AG04449 (cell line): ENCODE measurements at regions of chr4 and their contacts with region 1.

Region 1: DNA sequence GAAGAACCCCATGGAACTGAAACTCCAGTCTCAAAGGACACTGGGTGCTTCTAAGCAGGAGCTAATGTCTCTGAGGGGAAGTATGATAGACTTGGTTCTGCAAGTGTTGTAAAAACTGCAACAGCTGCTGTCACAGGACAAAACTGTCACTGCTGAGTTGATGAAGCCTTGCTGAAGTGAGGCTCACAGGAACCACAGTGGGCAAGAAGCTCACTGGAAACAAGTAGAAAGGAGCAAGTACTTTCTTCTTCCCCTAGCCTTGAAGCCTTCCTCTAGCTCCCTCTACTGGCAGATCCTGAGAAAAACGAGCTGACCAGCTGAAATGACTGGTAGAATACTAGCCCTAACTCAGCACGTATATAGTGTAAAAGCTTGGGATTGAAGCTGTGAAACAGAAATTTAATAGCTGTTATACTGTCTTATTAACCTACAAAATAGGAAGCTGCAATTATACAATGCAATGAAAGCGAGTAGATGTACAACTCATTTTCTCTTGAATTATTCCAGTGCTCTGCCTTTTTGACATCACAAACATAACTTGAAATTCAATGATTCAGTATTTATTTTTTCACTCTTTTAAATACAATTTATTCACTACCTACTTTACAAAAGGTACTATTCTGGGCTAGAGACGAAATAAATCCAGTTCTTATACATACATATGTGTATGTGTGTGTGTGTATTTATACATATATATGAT is 91.4 kb downstream of the GABRB1 start:
- DNase-seq: no peak
- H3K4me3 ChIP-seq: no peak overlapping the region
- CTCF ChIP-seq: peak; percentile 79

Region 2: DNA sequence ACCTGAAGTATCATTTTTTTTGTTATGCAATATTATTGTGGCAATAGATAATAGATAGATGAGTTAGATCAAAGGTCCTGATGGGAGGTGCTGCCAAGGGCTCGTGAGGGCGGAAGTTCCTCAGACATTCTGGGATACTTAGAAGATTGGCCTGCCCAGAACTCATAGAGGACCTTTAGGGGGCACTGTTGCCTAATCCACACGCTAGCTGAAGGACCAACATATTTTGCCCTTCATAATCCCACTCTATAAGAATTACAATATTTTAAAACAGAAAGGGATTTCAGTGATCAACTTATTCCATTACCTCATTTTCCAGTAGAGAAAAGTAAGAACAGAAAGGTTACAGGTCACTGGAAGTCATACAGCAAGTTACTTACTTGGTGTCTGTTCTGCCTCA is 190.8 kb before region 1 on chr4:
- CTCF ChIA-PET with region 1: interaction called, 15 read pairs
- POLR2A ChIA-PET with region 1: no interaction called
- DNase-seq: no peak
- H3K4me3 ChIP-seq: no peak overlapping the region
- CTCF ChIP-seq: peak; percentile 71

Region 3: GRCh38 chr4:46975812-46976553 is 146.8 kb before region 1 on chr4:
- CTCF ChIA-PET with region 1: no interaction called
- POLR2A ChIA-PET with region 1: no interaction called
- DNase-seq: no peak
- H3K4me3 ChIP-seq: no peak overlapping the region
- CTCF ChIP-seq: no peak

Region 4: DNA sequence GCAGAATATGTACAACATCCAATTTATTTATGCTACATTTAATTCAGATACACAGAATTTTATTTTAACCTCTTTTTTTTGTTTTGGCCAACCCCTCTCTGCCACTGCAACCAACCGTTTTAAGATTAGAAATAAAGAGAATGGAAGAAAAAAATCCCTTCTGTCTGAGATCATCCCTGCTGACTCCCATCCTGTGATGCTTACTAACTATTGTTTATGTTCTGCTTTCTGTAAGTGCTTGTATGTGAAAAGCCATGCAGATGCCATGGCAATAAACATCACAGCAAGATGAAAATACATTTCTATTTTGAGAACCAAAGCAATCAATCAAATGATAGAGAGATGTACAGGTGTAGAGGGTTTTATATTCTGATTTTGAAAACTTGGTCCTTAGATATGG is 21.3 kb before region 1 on chr4:
- CTCF ChIA-PET with region 1: interaction called, 56 read pairs
- POLR2A ChIA-PET with region 1: no interaction called
- DNase-seq: no peak
- H3K4me3 ChIP-seq: no peak overlapping the region
- CTCF ChIP-seq: no peak

Region 5: DNA sequence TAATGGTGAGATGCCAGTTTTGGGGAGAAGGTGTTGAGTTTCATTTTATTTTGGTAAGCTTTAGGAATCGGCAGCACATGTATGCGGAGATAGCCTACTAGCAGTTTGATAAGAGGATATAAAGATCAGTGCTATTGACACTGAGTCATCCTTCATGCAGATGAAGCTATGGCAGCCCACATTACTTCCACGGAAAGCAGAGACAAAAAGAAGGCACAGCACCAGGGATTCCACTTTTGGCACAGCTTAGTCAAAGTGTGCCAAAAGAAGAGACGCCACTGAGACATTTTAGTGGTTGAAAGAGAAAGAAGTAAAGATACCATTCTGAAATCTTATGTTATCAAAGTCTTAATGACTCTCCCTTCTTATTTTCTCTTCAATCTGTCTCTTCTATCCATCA is 12.5 kb after region 1 on chr4:
- CTCF ChIA-PET with region 1: interaction called, 37 read pairs
- POLR2A ChIA-PET with region 1: no interaction called
- DNase-seq: no peak
- H3K4me3 ChIP-seq: no peak overlapping the region
- CTCF ChIP-seq: no peak

Region 6: GRCh38 chr4:47383829-47384427 is 261.2 kb after region 1 on chr4:
- CTCF ChIA-PET with region 1: interaction called, 29 read pairs
- POLR2A ChIA-PET with region 1: no interaction called
- DNase-seq: no peak
- H3K4me3 ChIP-seq: no peak overlapping the region
- CTCF ChIP-seq: peak; percentile 29

Region 7: DNA sequence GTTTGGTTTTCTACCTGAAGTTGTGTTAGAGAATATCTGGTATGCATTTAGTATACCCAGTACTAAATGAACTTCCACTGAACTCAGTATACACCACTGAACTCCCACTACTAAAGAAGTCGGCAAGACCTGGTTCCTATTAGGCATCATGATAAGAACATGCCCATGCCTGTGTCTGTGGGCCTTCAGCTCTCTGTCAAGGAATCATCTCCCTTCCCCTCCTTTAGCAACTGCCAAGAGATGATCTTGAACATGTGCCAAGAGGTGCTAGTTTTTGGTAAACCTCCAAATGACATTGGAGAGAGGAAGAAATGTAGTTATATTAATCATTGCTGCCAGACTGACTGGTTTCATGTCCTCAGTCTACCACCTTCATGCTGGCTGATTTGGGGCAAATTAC is 475.6 kb after region 1 on chr4:
- CTCF ChIA-PET with region 1: no interaction called
- POLR2A ChIA-PET with region 1: no interaction called
- DNase-seq: no peak
- H3K4me3 ChIP-seq: no peak overlapping the region
- CTCF ChIP-seq: no peak